ENCODE measurements at regions of chr9 and their contacts with region 1.

Region 1: DNA sequence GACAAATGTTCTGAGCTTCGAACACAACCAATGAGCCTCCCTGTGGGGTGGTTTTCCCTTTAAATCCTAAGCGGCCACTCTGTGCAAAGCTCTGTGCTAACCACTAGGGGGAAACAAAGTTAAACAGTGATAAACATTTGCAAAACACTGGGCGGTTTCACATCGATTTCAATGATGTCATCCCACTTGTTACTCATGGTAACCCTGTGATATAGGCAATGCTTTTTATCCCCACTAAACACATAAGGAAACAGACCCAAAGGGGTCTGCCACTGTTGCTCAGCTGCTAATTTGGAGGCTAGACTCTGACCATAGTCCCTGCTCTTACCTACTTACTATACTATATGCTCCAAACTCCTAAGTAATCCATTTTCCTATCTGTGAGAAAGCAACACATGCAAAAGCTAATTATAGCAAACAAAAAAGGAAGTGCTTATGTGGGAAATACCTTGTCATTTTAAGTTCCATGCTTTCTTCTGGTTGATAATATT is 57.3 kb downstream of the PTPN3 start:
- DNase-seq: peak; percentile 80
- CTCF ChIP-seq: peak; percentile 79

Region 2: GRCh38 chr9:109244157-109245132 is 196.4 kb before region 1 on chr9:
- CTCF ChIA-PET with region 1: no interaction called
- POLR2A ChIA-PET with region 1: no interaction called
- DNase-seq: peak; percentile 71
- CTCF ChIP-seq: peak; percentile 95

Region 3: DNA sequence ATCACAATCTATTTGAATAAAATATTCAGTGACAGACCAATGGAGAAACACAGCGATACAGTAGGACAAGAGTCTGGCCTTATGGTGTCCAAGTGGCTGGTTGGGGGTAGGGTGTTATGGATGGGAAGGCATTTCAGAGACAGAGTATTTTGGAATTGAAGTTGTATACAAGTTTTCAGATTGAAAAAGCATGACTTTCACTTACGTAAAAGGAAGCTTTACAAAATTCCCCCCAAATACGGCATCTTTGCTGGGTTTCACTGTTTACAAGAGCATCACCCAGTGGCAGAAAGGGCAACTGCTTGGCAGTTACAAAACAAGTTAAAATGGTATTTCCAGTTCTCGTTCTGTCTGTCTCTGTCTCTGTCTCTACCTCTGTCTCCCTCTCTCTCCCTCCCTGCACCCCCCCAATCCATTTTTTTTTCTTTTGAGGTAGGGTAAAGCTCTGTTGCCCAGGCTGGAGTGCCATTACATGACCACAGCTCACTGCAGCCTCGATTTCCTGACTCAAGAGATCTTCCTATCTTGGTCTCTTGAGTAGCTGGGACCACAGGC is 29.0 kb before region 1 on chr9:
- CTCF ChIA-PET with region 1: interaction called, 15 read pairs
- POLR2A ChIA-PET with region 1: no interaction called
- DNase-seq: peak; percentile 61
- CTCF ChIP-seq: peak; percentile 84

Region 4: DNA sequence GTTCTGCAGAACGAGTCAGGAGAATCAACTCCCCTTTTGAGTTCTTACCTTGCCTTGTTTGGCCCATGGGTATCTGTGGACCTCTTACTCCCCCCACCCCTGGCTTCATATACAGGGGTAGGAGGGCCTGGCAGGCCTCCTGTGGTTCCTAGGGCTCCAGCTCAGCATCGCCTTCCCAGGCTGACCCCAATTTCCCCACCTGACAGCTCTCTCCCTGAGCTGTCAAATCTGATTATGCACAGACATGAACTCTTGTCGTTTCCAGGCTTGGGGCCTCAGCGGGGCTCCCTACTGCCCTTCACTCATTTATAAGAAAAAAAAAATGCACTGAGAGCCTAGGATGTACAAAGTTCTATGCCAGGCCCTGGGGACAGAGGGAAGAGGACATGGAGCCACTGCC is 10.6 kb before region 1 on chr9:
- CTCF ChIA-PET with region 1: interaction called, 42 read pairs
- POLR2A ChIA-PET with region 1: interaction called, 5 read pairs
- DNase-seq: no peak
- CTCF ChIP-seq: no peak

Region 5: GRCh38 chr9:109459423-109459822 is 18.6 kb after region 1 on chr9:
- CTCF ChIA-PET with region 1: interaction called, 84 read pairs
- POLR2A ChIA-PET with region 1: no interaction called
- DNase-seq: no peak
- CTCF ChIP-seq: no peak

Region 6: GRCh38 chr9:109538337-109538736 is 97.5 kb after region 1 on chr9:
- CTCF ChIA-PET with region 1: no interaction called
- POLR2A ChIA-PET with region 1: no interaction called
- DNase-seq: no peak
- CTCF ChIP-seq: no peak

Region 7: GRCh38 chr9:109600144-109600543 is 159.3 kb after region 1 on chr9:
- CTCF ChIA-PET with region 1: no interaction called
- POLR2A ChIA-PET with region 1: no interaction called
- DNase-seq: no peak
- CTCF ChIP-seq: no peak

Measured in GM10248 (cell line).